ENCODE measurements at regions of chr21 and their contacts with region 1.

Region 1: GRCh38 chr21:45140346-45140940 is 66.1 kb downstream of the ADARB1 start:
- DNase-seq: peak; percentile 86
- H3K4me3 Mint-ChIP-seq: no peak overlapping the region
- H3K27ac Mint-ChIP-seq: no peak overlapping the region
- H3K4me1 Mint-ChIP-seq: peaks cover 13% of the 10 kb centered on the region
- H3K27me3 Mint-ChIP-seq: no peaks in the 10 kb centered on the region
- CTCF ChIP-seq: peak; percentile 95

Region 2: DNA sequence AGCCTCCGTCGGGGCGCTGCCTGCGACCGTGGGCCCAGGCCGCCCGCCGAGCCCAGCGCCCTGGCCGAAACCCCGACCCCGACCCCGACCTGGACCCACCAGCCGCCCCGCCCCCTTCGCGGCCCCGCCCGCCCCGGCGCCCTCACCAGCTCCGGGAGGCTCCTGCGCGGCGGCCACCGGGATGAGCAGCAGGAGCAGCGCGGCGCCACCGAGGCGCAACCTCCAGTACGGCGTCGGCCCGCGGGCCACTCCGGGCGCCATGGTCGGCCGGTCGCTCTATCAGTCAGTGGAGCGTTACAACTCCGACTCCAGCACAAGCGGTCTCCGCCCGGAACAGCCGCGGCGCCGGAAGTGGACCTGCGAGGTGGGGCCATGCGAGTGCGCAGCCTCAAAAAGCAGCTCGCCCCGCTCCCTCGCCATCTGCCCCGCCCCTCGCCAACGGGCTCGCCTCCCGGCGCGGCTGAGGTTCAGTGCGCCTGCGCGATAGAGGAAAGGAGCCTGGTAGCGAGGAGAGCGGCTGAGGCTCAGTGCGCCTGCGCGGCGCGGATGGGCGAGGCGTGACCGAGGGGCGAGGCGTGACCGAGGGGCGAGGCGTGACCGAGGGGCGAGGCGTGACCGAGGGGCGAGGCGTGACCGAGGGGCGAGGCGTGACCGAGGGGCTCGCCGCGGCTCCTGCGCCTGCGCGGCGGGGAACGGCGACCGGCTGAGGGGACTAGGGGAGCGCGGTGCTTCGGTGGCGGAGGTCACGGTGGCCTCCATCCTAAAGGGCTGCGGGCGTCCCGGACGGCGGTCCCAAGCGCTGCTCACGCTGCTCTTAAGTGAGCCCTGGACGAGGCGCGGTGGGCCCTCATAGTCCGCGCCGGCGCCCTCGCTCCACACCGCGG is 266.8 kb before region 1 on chr21 and contains the start of gene PTTG1IP:
- CTCF ChIA-PET with region 1: no interaction called
- POLR2A ChIA-PET with region 1: interaction called, 4 read pairs
- intact Hi-C with region 1: loop called (anchors 5 kb)
- DNase-seq: peak; percentile 98
- H3K4me3 Mint-ChIP-seq: peak within 1 kb of the TSS; percentile 80
- H3K27ac Mint-ChIP-seq: peak within 1 kb of the TSS; percentile 91
- H3K4me1 Mint-ChIP-seq: peaks cover 40% of the 10 kb centered on the region
- H3K27me3 Mint-ChIP-seq: no peaks in the 10 kb centered on the region
- CTCF ChIP-seq: no peak
- total RNA-seq, gene PTTG1IP: 326 and 338 TPM in 2 replicates

Region 3: GRCh38 chr21:45074048-45074817 is 66.2 kb before region 1 on chr21 and contains the start of gene ADARB1:
- CTCF ChIA-PET with region 1: interaction called, 37 read pairs
- POLR2A ChIA-PET with region 1: no interaction called
- intact Hi-C with region 1: no loop called
- DNase-seq: peak; percentile 43
- H3K4me3 Mint-ChIP-seq: peak within 1 kb of the TSS; percentile 84
- H3K27ac Mint-ChIP-seq: peak within 1 kb of the TSS; percentile 54
- H3K4me1 Mint-ChIP-seq: peaks cover 13% of the 10 kb centered on the region
- H3K27me3 Mint-ChIP-seq: no peaks in the 10 kb centered on the region
- CTCF ChIP-seq: no peak
- total RNA-seq, gene ADARB1: 18.1 and 19.4 TPM in 2 replicates

Region 4: DNA sequence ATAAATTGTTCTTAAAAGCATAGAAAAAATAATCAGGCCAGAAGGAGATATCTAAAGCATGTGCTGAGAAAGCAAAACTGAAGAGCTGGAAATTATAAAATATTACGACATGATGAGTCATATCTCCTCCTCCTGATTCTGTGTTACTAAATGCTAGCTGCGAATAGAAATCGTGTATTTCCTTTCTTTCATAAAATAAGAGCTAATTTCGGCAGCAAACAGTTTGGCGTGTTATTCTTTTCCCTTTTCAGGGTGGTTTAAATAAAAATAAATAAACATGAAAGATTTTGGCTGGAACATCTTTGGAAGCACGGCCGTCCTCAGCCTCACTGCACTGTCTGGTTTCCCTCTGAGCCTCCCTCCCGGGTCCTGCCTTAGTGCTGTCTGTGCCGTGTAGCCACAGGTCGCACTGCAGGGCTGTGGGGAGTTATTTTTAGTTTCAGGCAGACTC is 10.1 kb before region 1 on chr21:
- CTCF ChIA-PET with region 1: interaction called, 85 read pairs
- POLR2A ChIA-PET with region 1: interaction called, 7 read pairs
- intact Hi-C with region 1: no loop called
- DNase-seq: peak; percentile 67
- H3K4me3 Mint-ChIP-seq: peak overlapping the region; percentile 61
- H3K27ac Mint-ChIP-seq: peak overlapping the region; percentile 86
- H3K4me1 Mint-ChIP-seq: peaks cover 14% of the 10 kb centered on the region
- H3K27me3 Mint-ChIP-seq: no peaks in the 10 kb centered on the region
- CTCF ChIP-seq: no peak

Region 5: DNA sequence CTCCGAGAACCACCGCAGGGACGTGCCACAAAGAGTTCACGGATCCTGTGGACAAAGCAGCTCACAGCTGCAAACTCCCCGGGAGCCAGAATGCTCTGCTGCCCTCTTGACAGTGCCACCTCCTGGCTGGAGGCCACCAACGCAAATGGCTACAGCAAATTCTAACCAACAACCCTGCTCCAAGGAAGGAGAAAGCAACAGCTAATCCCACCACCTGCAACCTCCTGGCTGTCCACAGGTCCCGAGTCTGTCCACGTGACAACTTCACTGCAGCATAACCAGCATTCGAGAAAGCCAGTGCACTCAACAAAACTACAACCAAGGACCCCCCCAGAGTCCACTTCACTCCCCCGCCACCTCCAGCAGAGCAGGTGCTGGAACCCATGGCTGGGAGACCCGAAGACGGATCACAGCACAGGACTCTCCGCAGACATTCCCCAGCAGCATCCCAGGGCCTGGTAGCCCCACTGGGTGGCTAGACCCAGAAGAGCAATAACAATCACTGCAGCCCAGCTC is 129.9 kb after region 1 on chr21:
- CTCF ChIA-PET with region 1: interaction called, 10 read pairs
- POLR2A ChIA-PET with region 1: interaction called, 3 read pairs
- intact Hi-C with region 1: no loop called
- DNase-seq: no peak
- H3K4me3 Mint-ChIP-seq: no peak overlapping the region
- H3K27ac Mint-ChIP-seq: no peak overlapping the region
- H3K4me1 Mint-ChIP-seq: no peaks in the 10 kb centered on the region
- H3K27me3 Mint-ChIP-seq: no peaks in the 10 kb centered on the region
- CTCF ChIP-seq: no peak

Region 6: DNA sequence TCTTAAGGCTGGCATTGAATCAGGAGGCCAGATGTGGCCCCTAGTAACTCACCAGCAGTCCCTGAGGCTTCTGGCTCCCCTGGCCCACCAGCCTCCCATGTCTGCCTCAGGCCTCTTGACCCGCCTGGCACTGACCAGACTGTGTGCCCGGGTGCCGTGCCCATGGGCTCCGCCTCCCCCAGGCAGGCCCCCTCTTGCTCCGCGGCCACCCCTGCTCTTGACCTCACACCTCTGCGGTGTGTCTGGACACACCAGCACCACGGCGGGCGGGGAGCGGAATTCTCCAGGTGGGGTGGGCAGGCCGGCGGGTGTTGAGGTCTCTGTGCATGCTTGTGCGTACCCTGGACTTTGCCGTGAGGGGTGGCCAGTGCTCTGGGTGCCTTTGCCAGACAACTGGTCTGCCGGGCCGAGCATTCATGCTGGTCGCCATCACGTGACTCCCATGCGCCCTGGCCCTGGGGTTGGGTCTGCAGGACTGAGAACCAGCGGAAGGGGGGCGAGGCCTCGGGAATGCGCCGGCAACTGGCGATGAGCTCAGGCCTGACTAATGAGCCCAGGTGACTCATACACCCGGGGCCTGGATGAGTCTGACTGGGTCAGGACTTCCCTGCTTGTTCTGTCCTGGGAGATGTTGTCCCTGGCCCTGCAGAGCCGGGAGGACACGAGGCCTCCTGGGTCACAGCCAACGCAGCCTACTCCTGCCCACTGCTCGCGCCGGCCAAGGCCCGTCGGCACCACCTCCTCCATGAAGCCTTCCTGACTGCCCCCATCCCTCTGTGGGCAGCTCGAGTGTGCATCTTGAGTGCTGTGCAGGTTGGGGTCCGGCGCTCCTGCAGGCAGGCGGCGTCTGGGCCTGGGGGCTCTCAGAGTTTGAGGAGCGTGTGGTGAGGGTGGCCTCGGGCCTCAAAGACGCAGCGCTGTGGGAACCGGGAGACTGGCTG is 287.2 kb after region 1 on chr21:
- CTCF ChIA-PET with region 1: interaction called, 11 read pairs
- POLR2A ChIA-PET with region 1: no interaction called
- intact Hi-C with region 1: no loop called
- DNase-seq: peak; percentile 94
- H3K4me3 Mint-ChIP-seq: no peak overlapping the region
- H3K27ac Mint-ChIP-seq: no peak overlapping the region
- H3K4me1 Mint-ChIP-seq: peaks cover 8% of the 10 kb centered on the region
- H3K27me3 Mint-ChIP-seq: no peaks in the 10 kb centered on the region
- CTCF ChIP-seq: no peak

Region 7: DNA sequence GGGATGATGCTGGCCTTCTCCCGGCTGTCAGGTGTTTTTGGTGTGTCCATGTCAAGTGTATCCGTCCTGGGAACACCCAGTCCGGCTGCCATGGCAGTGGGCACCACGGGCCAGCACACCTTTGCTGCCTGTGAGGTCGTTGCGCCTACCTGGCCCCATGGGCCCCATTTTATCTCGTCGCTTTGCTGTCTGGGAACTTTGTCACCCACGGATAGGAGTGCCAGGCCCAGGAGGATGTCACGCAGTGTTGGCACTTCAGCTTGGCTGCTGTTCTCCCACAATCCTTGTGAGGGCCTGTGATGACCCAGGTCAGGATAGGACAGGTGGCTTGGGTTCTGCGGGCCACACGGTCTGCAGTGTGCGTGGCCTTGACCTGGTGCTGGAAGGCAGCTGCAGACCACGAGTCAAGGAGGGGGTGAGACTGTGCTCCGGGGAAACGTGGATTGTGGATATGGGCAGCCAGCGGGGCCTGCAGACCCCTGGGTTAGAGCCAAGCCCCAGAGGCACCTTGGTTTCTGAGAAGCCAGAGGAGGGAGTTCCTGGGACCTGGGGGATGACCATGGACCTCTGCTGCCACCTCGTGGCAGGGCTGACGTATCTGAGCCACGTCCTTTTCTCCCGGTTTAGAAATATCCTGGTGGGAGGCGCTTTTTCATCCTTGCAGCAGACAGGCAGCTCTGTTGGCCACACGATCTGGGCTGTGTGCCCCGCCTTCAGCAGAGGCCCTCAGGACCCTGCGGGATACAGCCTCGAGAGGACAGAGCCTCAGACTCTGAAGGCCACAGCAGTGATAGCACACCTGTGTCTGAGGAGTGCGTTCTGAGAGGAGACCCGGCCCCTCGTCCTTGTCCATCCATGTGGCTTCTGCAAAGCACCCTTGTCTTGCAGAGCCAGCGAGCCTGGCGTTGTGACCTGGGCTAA is 680.0 kb after region 1 on chr21:
- CTCF ChIA-PET with region 1: interaction called, 4 read pairs
- POLR2A ChIA-PET with region 1: no interaction called
- intact Hi-C with region 1: loop called (anchors 2 kb)
- DNase-seq: peak; percentile 85
- H3K4me3 Mint-ChIP-seq: no peak overlapping the region
- H3K27ac Mint-ChIP-seq: peak overlapping the region; percentile 11
- H3K4me1 Mint-ChIP-seq: peaks cover 22% of the 10 kb centered on the region
- H3K27me3 Mint-ChIP-seq: peaks cover 30% of the 10 kb centered on the region
- CTCF ChIP-seq: peak; percentile 90

Measured in MCF 10A (cell line).